ENCODE measurements at regions of chr19 and their contacts with region 1.

Region 1: GRCh38 chr19:18328340-18329034 is 5.6 kb upstream of the LSM4 start:
- DNase-seq: peak; percentile 89
- H3K4me3 ChIP-seq: peak overlapping the region; percentile 18
- H3K27me3 ChIP-seq: no peaks in the 10 kb centered on the region
- CTCF ChIP-seq: peak; percentile 94

Region 2: DNA sequence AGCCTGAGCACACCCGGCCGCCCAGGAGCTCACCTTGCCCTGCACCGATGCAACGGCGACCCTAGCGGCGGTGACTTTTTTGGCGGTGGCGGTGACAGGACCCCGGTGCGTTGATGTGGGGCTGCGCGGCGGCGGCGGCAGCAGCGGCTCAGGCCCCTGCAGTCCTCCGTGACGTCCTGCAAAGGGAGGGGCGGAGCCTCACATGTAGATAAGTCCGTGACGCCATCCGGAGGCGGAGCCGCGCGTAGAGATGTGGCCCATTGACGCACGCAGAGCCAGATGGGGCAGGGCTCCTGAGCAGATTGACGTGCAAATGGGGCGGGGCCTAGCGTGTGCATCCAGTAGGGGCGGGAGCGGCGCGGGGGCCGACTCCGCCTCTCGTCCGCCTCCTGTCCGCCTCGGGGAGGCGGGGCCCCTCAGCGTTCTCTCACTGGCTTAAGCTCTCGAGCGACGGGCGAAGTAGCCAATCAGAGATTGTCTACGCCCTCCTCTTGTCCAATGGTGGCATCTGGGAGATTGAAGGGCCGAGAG is 124.6 kb before region 1 on chr19 and contains the start of gene RAB3A:
- CTCF ChIA-PET with region 1: interaction called, 11 read pairs
- POLR2A ChIA-PET with region 1: no interaction called
- DNase-seq: peak; percentile 100
- H3K4me3 ChIP-seq: peak within 1 kb of the TSS; percentile 64
- H3K27me3 ChIP-seq: no peaks in the 10 kb centered on the region
- CTCF ChIP-seq: no peak
- polyA plus RNA-seq, gene RAB3A: 1.4 and 2.0 TPM in 2 replicates

Region 3: DNA sequence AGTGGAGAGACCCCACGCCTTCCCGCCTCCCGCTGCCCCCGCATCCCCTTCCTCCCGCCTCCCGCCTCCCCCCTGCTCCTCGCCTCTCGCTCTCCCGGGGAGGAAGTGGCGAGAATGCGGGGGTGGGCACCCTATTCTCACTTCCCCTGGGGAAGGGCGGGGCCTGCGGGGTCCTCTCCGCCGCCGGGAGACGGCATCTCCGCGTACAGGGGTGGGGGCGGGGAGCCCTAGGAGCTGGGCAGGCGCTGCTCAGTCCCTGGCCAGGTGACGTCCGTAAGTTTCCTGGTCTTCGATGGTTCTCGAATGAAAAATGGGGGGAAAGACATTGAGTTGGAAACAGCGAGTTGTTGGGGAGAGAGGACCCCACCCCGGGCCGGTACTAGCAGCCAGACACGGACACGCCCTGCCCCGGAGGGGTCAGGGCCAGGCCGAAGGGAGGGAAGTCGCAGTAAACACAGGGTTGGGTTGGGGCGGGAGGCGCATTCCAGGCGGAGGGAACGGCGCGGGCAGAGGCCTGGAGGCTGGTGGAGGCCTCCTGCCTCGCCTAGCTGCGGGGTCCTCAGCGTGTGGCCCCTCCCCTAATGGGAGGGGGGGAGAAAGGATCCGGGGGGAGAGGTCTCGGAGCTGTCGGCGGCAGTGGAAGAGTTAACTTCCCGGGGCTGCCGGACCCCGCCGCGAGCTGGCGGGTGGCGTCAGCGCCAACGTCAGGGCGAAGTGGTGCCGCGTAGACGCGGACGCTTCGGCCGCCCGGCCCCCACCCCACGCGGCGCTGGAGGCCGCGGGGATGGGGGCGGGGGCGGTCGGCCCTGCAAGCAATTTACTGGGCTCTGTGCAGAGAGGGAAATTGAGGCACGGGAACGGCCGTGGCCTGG is 36.7 kb before region 1 on chr19:
- CTCF ChIA-PET with region 1: interaction called, 3 read pairs
- POLR2A ChIA-PET with region 1: interaction called, 13 read pairs
- DNase-seq: no peak
- H3K4me3 ChIP-seq: peak overlapping the region; percentile 63
- H3K27me3 ChIP-seq: no peaks in the 10 kb centered on the region
- CTCF ChIP-seq: no peak

Region 4: DNA sequence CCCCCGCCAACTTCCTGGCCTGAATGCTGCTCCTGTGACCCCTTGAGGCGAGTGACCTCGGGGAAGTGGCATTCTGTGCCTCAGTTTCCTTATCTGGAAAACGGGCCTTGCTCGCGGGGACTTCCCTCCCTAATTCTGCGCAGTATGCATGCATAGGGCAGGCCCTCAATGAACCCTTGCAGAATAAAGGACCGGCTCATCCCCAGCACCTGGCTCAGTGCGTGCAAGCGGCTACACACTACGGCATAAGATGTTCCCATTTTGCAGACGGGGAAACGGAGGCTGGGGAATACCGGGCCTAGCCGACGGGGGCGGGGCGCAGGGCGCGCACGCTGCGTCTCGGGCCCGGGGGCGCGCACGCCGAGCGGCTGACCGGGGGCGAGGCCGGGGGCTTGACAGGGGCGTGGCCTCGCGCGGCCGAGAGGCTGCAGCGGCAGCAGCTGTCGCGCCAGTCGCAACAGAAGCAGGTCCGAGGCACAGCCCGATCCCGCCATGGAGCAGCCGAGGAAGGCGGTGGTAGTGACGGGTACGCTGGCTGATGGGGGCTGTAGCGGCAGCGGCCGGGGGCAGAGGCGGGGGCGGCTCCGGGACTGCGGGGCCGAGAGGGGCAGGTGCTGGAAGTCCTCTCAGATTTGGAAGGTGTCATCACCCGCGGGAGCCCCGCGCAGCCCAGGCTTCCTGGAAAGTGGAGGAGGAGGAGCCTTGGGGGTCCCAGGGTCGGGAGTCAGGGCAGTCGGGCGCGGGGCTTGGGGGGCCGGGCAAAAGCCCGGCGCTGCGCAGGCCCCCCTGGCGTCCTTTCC is 11.9 kb after region 1 on chr19 and contains the start of gene PGPEP1:
- CTCF ChIA-PET with region 1: interaction called, 14 read pairs
- POLR2A ChIA-PET with region 1: no interaction called
- DNase-seq: no peak
- H3K4me3 ChIP-seq: peak within 1 kb of the TSS; percentile 83
- H3K27me3 ChIP-seq: no peaks in the 10 kb centered on the region; the same call in 1 of the 2 replicates
- CTCF ChIP-seq: no peak
- polyA plus RNA-seq, gene PGPEP1: 30.7 and 32.2 TPM in 2 replicates

Region 5: DNA sequence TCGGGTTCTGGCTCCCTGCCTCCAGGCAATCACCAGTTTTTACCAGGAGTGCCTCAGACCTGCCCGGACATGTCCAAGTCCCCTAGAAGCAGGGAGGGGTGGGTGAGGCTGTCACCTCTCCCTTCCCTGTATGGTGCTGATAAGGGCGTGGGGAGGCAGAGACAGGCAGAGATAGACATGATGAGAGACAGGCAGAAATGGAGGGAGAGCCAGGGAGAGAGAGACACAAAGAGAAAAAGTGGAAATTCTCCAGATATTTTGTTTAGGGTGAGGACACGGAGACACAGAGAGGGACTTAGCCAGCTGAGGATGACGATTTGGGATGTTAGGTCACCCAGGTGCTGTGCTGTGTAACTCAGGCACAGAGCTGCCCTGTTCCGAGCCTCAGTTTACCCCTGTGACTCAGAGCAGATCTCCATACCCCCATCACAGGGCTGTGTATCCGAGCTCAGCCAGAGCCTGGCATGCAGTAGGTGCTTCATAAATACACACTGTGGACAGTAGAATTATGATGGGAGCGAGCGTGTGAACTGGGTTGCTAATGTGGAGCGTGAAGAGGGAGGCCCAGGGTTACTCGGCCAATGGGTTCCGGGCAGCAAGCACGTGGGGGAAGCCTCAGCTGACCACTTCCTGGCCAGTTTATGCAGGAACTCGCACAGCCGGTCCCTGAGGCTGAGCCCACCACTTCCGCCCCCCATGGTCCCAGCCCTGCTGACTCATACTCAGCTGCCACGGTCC is 45.6 kb after region 1 on chr19:
- CTCF ChIA-PET with region 1: no interaction called
- POLR2A ChIA-PET with region 1: no interaction called
- DNase-seq: peak; percentile 92
- H3K4me3 ChIP-seq: no peak overlapping the region
- H3K27me3 ChIP-seq: no peaks in the 10 kb centered on the region
- CTCF ChIP-seq: no peak